Esophagus squamous epithelium (tissue), 5 donors: ENCODE measurements at regions of chr6 and their contacts with region 1.

Region 1: DNA sequence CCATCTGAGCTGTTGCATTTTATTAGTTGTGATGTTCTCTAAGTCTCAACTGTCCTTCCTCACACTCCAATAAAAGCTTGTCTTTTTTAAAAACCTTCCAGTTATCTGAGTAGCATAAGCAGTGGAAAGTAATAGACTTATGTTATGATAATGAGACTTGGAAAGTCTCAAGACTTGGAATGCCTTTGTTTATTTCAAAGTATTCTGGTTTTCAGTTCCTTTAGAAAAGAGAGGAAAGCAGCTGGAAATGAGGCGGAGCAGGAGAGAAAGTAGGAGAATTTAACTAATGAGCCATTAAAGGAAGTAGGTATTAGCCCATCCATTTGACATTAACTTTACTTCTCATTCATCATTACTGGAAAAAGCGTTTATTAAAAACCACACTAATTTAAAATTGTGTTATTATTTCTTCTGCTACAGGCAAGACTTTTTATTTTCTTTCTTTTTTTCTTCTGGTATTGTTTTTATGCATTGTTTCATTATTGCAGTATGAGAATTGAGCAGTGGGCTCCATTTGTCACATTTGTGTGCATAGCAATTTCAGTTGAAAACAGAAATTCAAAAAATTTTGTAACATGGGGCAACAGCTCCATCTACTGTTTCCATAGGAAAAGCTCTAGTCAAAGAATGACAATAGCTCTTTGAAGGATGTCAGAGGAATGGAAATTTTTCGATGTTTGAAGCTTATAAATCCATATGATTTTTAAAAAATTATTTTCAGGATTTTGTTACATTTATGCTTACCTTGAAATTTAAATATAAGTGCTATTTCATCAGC is 194.8 kb downstream of the COL9A1 start:
- DNase-seq: no peak
- H3K4me3 ChIP-seq: no peak overlapping the region
- H3K27ac ChIP-seq: no peak overlapping the region
- H3K4me1 ChIP-seq: no peaks in the 10 kb centered on the region
- H3K27me3 ChIP-seq: no peaks in the 10 kb centered on the region
- CTCF ChIP-seq: peak in 5 of 6 experiments; percentile 33 to 54 (median 54)
- POLR2A ChIP-seq: no peak

Region 2: GRCh38 chr6:69609836-69610472 is 498.1 kb before region 1 on chr6:
- intact Hi-C with region 1: no loop called
- DNase-seq: no peak
- H3K4me3 ChIP-seq: no peak overlapping the region
- H3K27ac ChIP-seq: no peak overlapping the region
- H3K4me1 ChIP-seq: no peaks in the 10 kb centered on the region
- H3K27me3 ChIP-seq: no peaks in the 10 kb centered on the region
- CTCF ChIP-seq: no peak
- POLR2A ChIP-seq: no peak

Region 3: GRCh38 chr6:69848552-69848951 is 259.5 kb before region 1 on chr6:
- intact Hi-C with region 1: loop called (anchors 10 kb)
- DNase-seq: no peak
- H3K4me3 ChIP-seq: no peak overlapping the region
- H3K27ac ChIP-seq: no peak overlapping the region
- H3K4me1 ChIP-seq: no peaks in the 10 kb centered on the region
- H3K27me3 ChIP-seq: peaks cover 0 to 7% (median 0%) of the 10 kb centered on the region in 4 donors
- CTCF ChIP-seq: no peak
- POLR2A ChIP-seq: no peak